Activated naive CD8-positive, alpha-beta T cell treated with anti-CD3 and anti-CD28 coated beads, Interleukin-2, amount 10 ng/mL, durations not matched to agents 7 days and 5 days (primary cell): ENCODE measurements at regions of chr12 and their contacts with region 1.

Region 1: GRCh38 chr12:9760699-9761418 is at the start of gene CD69:
- DNase-seq: peak; percentile 67
- ATAC-seq: peak; percentile 55
- H3K4me3 Mint-ChIP-seq: peak within 1 kb of the TSS; percentile 93
- H3K27ac Mint-ChIP-seq: peak within 1 kb of the TSS; percentile 94
- H3K4me1 Mint-ChIP-seq: peaks cover 38% of the 10 kb centered on the region
- H3K27me3 Mint-ChIP-seq: no peaks in the 10 kb centered on the region
- total RNA-seq, gene CD69: 111 to 116 TPM

Region 2: GRCh38 chr12:9730011-9730410 is 30.8 kb before region 1 on chr12:
- POLR2A ChIA-PET with region 1: no interaction called
- DNase-seq: no peak
- ATAC-seq: no peak
- H3K4me3 Mint-ChIP-seq: no peak overlapping the region
- H3K27ac Mint-ChIP-seq: no peak overlapping the region
- H3K4me1 Mint-ChIP-seq: peaks cover 22% of the 10 kb centered on the region
- H3K27me3 Mint-ChIP-seq: no peaks in the 10 kb centered on the region

Region 3: GRCh38 chr12:9741726-9742125 is 19.1 kb before region 1 on chr12:
- POLR2A ChIA-PET with region 1: interaction called, 84 read pairs
- DNase-seq: peak; percentile 54
- ATAC-seq: peak; percentile 66
- H3K4me3 Mint-ChIP-seq: peak overlapping the region; percentile 94
- H3K27ac Mint-ChIP-seq: peak overlapping the region; percentile 99
- H3K4me1 Mint-ChIP-seq: peaks cover 59% of the 10 kb centered on the region
- H3K27me3 Mint-ChIP-seq: no peaks in the 10 kb centered on the region

Region 4: DNA sequence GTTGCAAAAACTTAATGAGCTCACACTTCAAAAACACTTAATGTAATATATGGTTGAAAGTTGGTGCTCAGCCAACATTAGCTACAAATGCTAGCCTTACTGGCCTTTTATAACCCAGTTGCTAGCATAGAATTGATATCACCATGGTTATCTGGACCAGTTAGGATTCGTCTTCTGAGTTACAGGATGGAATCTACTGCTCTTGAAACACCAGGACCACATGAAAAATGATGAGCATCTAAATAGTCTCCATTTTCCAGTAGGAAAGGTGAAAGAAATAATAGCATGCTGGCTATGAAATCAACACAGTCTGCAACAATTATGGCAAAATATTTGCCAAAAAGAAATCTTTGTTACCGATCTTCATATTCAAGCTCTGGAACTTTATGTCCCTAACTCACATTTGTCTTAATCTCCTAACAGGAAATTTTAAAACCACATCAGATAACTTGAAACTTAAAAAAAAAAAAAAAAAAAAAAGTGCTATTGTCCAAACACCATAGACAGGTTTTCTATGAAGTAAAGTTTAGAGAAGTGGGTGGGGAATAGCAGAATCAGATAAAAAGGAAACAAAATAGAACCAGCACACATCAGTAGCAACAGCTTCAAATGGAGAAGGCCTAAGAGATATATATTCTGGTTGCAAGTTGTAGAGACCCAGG is 12.5 kb after region 1 on chr12:
- POLR2A ChIA-PET with region 1: interaction called, 104 read pairs
- DNase-seq: no peak
- ATAC-seq: peak; percentile 80
- H3K4me3 Mint-ChIP-seq: peak overlapping the region; percentile 68
- H3K27ac Mint-ChIP-seq: peak overlapping the region; percentile 60
- H3K4me1 Mint-ChIP-seq: peaks cover 69% of the 10 kb centered on the region
- H3K27me3 Mint-ChIP-seq: no peaks in the 10 kb centered on the region

Region 5: GRCh38 chr12:9869307-9870161 is 108.7 kb after region 1 on chr12 and contains the start of gene CLEC2B:
- POLR2A ChIA-PET with region 1: interaction called, 209 read pairs
- DNase-seq: no peak
- ATAC-seq: peak; percentile 58
- H3K4me3 Mint-ChIP-seq: peak within 1 kb of the TSS; percentile 85
- H3K27ac Mint-ChIP-seq: peak within 1 kb of the TSS; percentile 92
- H3K4me1 Mint-ChIP-seq: peaks cover 18% of the 10 kb centered on the region
- H3K27me3 Mint-ChIP-seq: no peaks in the 10 kb centered on the region
- total RNA-seq, gene CLEC2B: 83.9 to 89.7 TPM

Region 6: GRCh38 chr12:10557766-10558165 is 796.9 kb after region 1 on chr12:
- POLR2A ChIA-PET with region 1: interaction called, 71 read pairs
- DNase-seq: no peak
- ATAC-seq: no peak
- H3K4me3 Mint-ChIP-seq: peak overlapping the region; percentile 88
- H3K27ac Mint-ChIP-seq: peak overlapping the region; percentile 91
- H3K4me1 Mint-ChIP-seq: peaks cover 46% of the 10 kb centered on the region
- H3K27me3 Mint-ChIP-seq: no peaks in the 10 kb centered on the region